Breast epithelium (tissue), 4 donors: ENCODE measurements at regions of chr6 and their contacts with region 1.

Region 1: DNA sequence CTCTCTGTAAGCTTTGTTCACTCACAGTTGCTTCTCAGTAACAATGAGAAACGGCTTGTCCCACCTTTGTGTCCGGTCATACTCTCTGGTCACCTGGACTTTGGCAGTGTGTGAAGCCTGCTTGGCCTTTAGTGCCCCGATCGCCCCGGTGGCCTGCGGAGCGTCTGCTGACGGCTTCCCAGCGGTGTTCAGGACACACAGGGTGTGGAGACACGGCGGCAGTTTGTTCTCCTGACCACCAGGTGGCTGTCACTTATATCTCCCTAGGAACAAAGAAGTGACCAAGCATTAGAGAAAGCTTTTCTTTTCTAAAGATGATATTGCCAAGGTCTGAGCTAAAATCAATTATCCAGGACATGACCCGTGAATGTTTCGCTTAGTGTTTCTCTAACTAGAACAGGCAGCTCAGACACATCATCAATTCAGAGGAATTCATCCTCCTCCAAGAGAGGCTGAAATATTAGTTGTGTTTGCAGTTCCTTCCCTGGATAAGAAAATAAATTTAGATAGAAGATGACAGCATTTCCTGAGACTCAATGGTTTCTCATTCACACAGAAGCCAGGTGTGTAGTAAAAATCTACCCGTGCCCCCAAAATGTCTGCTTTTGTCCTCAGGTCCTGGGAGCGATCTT is 167.4 kb upstream of the THBS2 start:
- DNase-seq: no peak
- H3K4me3 ChIP-seq: no peak overlapping the region
- H3K27ac ChIP-seq: no peak overlapping the region
- H3K4me1 ChIP-seq: no peaks in the 10 kb centered on the region
- H3K27me3 ChIP-seq: no peaks in the 10 kb centered on the region
- CTCF ChIP-seq: peak in 1 of 3 donors; percentile 31
- POLR2A ChIP-seq: no peak

Region 2: DNA sequence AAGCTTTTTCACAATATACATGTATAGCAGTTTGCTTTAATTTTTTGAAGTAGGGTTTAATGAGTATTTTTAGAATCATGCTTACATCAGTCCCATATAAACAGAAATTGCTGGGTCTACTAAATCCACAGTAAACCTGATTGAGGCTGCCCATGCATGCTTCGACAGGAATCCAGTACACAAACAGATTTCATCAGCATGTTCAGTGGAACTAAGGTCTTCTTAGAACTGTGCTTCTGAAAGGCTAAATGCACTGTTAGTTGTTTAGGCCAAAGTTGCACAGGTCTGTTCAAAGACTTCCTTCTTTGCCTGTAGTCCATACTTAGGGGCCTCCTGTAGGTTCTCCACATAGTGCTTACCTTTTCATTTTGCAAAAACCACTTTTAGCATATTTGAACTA is 124.9 kb before region 1 on chr6:
- intact Hi-C with region 1: loop called (anchors 5 kb)
- DNase-seq: no peak
- H3K4me3 ChIP-seq: no peak overlapping the region
- H3K27ac ChIP-seq: no peak overlapping the region
- H3K4me1 ChIP-seq: no peaks in the 10 kb centered on the region
- H3K27me3 ChIP-seq: no peaks in the 10 kb centered on the region
- CTCF ChIP-seq: no peak
- POLR2A ChIP-seq: no peak

Region 3: GRCh38 chr6:169439710-169440109 is 18.7 kb after region 1 on chr6:
- intact Hi-C with region 1: no loop called
- DNase-seq: no peak
- H3K4me3 ChIP-seq: no peak overlapping the region
- H3K27ac ChIP-seq: no peak overlapping the region
- H3K4me1 ChIP-seq: no peaks in the 10 kb centered on the region
- H3K27me3 ChIP-seq: no peaks in the 10 kb centered on the region
- CTCF ChIP-seq: no peak
- POLR2A ChIP-seq: no peak